Lower leg skin (tissue), 4 donors: ENCODE measurements at regions of chr13 and their contacts with region 1.

Region 1: GRCh38 chr13:105247830-105248229 is 1287.6 kb downstream of the EFNB2 start:
- DNase-seq: no peak
- H3K4me3 ChIP-seq: no peak overlapping the region
- CTCF ChIP-seq: no peak
- POLR2A ChIP-seq: no peak

Region 2: DNA sequence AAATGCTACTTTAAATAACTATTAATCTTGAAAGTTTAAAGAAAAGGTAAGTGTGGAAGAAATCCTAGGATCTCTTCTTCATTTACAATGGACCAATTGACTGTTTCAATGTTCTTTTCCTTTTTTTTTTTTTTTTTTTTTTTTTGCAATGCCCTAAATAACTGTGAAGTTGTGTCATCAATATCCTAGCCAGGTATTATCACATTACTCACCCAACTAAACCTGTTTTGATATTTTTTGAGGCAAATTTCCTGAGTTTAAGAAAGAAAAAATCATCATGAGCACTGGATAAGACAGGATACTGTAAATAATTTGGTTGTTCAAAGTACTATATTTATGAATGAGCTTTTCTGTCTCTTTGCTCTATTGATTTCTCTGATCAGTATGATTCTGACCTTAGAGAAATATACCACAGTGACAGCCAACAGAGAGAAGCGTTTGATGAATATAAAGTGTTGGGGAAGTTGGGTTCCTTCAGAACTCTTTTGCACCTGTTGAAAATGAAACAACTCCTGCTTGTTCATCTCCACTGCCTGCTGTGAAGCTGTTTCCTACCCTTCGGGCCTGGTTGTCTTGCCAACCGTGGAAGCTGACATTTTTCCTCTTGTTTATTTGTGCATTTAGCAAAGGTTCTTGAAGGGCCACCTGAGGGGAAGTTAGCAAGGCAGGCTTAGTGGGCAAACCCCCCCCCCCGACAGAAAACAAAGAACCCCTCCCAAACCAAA is 961.1 kb before region 1 on chr13:
- intact Hi-C with region 1: no loop called
- DNase-seq: no peak
- H3K4me3 ChIP-seq: no peak overlapping the region
- CTCF ChIP-seq: no peak
- POLR2A ChIP-seq: no peak

Region 3: GRCh38 chr13:105232439-105232838 is 15.4 kb before region 1 on chr13:
- intact Hi-C with region 1: loop called (anchors 1 kb)
- DNase-seq: no peak
- H3K4me3 ChIP-seq: no peak overlapping the region
- CTCF ChIP-seq: no peak
- POLR2A ChIP-seq: no peak